ENCODE measurements at regions of chr11 and their contacts with region 1.

Region 1: DNA sequence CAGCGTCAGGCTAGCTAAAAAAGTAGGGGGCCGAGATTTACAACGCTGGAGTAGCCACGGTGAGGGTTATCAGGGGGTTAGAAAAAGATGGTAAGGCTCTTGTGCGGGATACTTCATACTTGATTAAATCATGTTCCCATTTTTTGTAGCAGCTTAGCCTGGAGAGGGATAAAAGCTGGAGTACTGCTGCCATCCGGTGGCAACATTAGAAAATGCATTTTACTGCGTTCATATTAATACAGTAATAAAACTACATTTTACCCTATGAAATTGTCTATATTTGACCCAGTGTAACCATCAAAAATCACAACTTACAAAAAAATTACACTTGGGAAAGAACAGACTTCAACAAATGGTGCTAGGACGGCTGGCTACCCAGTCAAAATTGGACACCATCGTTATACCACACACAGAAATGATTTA is 17.3 kb downstream of the RPUSD4 start:
- DNase-seq: peak in 4 of 5 donors; percentile 26 to 36 (median 30)
- H3K4me3 ChIP-seq: no peak overlapping the region
- H3K4me3 Mint-ChIP-seq: peak overlapping the region in 1 of 8 donors; percentile 45
- H3K27ac ChIP-seq: no peak overlapping the region
- H3K27ac Mint-ChIP-seq: peak overlapping the region in 1 of 7 donors; percentile 42
- H3K4me1 ChIP-seq: no peaks in the 10 kb centered on the region
- H3K4me1 Mint-ChIP-seq: peaks cover 0 to 3% (median 0%) of the 10 kb centered on the region in 4 donors
- H3K27me3 ChIP-seq: no peaks in the 10 kb centered on the region
- H3K27me3 Mint-ChIP-seq: no peaks in the 10 kb centered on the region

Region 2: DNA sequence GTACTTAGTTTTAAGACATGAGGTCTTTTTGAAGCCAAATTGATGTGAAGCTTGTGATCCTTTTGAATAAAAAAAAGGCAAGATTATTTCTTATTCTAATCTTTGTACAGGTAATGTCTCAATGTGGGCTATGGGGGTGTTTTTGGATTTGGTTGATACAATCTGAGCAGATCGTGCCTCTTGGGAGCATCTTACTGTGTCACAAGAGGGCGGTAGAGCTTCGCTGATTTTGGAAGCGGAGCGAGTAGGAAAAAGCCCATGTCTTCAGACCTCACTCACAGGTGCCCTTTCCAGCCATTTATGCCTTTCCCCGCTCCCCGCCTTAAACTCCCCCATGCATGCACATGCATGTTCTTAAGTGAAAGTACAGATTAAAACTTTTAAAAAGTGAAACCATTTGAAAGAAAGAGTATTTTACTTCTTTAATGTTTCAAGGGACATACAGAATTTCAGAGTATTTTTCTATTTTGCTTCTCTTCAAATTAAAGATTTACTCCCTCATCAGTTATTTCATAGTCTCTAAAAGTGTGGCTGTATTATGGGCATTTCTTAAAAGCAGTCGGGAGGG is 271.0 kb before region 1 on chr11:
- CTCF ChIA-PET with region 1: interaction called, 81 read pairs
- POLR2A ChIA-PET with region 1: interaction called, 3 read pairs
- intact Hi-C with region 1: no loop called
- DNase-seq: peak; percentile 47 to 57 (median 52)
- H3K4me3 ChIP-seq: no peak overlapping the region
- H3K4me3 Mint-ChIP-seq: no peak overlapping the region
- H3K27ac ChIP-seq: no peak overlapping the region
- H3K27ac Mint-ChIP-seq: no peak overlapping the region
- H3K4me1 ChIP-seq: no peaks in the 10 kb centered on the region
- H3K4me1 Mint-ChIP-seq: peaks cover 0 to 3% (median 1%) of the 10 kb centered on the region in 4 donors
- H3K27me3 ChIP-seq: no peaks in the 10 kb centered on the region
- H3K27me3 Mint-ChIP-seq: peaks cover 15 to 22% of the 10 kb centered on the region in 2 donors

Region 3: DNA sequence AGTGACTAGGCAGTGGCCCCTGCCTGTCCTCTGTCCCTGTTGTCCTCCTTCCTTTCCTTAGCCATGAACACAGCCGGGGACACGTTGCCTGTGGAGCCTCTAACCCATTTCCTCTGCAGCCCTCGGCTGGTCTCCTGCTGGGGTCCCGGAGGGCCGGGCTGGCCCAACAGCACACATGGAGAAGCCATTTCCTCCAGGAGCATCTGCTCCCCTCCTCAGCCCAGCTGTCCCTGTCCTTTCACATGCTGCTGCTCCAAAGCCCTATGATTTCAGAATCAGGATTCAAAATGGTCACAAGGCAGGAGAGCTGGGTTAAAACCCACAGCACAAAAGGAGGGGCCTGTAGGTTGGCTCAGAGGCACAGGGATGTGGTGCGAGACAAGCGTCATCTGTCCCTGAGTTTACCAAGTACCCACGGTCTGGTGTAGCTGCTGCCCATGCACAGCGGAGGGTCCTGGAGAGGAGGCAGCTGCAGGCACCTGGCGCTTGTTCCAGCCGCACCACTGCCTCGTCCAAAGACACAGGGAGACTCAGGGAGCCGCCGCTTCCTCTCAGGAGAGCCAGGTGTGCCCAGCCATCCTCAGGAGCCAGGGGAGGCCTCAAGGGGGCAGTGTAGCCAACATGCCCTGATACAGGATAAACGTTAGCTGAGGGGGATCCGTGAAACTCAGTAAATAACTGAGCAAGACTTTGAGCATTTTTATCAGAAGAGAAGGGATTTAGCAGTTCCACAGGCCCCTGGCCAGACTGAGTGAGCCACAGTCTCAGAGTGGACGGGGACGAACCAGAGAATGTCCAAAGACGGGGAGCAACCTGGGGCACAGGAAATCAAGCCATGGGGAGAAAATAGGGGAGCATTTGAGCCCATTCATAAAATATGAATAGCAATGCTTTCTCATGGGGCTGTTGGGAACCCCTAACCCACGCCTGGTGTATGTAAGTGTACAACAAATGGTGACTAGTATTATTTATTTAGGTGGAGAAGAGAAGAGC is 252.2 kb before region 1 on chr11:
- CTCF ChIA-PET with region 1: interaction called, 41 read pairs
- POLR2A ChIA-PET with region 1: no interaction called
- intact Hi-C with region 1: no loop called
- DNase-seq: peak in 4 of 5 donors; percentile 27 to 29 (median 29)
- H3K4me3 ChIP-seq: no peak overlapping the region
- H3K4me3 Mint-ChIP-seq: peak overlapping the region in 4 of 8 donors; percentile 5 to 61 (median 48)
- H3K27ac ChIP-seq: no peak overlapping the region
- H3K27ac Mint-ChIP-seq: peak overlapping the region in 2 of 7 donors; percentile 6 to 55
- H3K4me1 ChIP-seq: peaks cover 5% of the 10 kb centered on the region
- H3K4me1 Mint-ChIP-seq: peaks cover 6 to 19% (median 9%) of the 10 kb centered on the region in 4 donors
- H3K27me3 ChIP-seq: peaks cover 6% of the 10 kb centered on the region
- H3K27me3 Mint-ChIP-seq: peaks cover 0 to 3% of the 10 kb centered on the region in 2 donors

Region 4: DNA sequence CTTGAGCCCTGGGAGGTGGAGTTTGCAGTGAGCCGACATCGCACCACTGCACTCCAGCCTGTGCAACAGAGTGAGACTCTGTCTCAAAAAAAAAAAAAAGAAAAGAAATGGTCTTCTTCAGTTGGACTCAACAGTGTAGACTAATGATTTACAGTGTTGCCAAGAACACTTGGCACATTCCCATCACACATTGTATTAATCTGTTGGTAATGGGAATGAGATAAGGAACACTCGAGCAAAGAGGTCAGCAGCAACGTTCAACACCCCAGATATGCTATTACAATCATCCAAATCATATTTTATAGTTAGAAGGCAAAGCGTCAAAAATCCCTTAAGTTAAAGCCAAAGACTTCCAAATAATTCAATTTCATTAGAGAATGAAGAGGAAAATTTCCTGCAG is 145.9 kb before region 1 on chr11:
- CTCF ChIA-PET with region 1: no interaction called
- POLR2A ChIA-PET with region 1: no interaction called
- intact Hi-C with region 1: no loop called
- DNase-seq: no peak
- H3K4me3 ChIP-seq: no peak overlapping the region
- H3K4me3 Mint-ChIP-seq: no peak overlapping the region
- H3K27ac ChIP-seq: no peak overlapping the region
- H3K27ac Mint-ChIP-seq: no peak overlapping the region
- H3K4me1 ChIP-seq: no peaks in the 10 kb centered on the region
- H3K4me1 Mint-ChIP-seq: peaks cover 0 to 6% (median 3%) of the 10 kb centered on the region in 4 donors
- H3K27me3 ChIP-seq: no peaks in the 10 kb centered on the region
- H3K27me3 Mint-ChIP-seq: peaks cover 3 to 4% of the 10 kb centered on the region in 2 donors

Region 5: DNA sequence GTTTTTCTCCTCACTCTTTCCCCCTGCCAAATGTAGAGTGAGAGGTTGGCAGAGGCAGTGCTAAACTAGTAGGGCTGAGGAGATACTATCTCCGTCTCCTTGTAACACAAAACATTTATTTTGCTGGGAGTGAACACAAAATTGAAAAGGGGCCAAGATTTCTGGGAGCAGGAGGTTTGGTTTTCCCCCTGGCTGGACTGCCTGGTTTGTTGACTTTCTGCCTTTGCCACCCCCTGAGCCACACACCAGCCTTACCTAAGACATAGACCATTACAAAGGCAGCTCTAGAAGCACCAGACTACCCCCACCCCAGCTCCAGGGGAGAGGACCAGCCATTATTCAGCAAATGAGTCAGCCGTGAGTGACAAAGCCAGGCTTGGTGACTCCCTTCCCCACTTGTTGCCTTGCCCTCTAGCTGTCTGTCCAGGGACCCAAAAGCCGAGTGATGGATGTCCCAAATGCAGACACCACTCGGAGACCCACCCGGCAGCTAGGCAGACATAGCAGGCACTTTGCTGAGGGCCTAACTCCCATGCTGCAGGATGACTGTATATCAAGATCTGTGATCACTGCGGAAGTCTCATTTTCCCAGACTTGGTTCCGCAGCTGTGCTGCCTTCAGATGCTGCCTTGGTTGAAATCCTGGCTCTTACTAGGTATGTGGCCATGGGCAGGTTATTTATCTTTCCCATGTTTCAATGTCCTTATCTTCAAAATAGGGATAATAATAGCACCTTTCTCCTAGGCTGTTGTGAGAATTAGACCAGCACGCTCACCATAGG is 113.8 kb before region 1 on chr11:
- CTCF ChIA-PET with region 1: no interaction called
- POLR2A ChIA-PET with region 1: no interaction called
- intact Hi-C with region 1: no loop called
- DNase-seq: no peak
- H3K4me3 ChIP-seq: no peak overlapping the region
- H3K4me3 Mint-ChIP-seq: no peak overlapping the region
- H3K27ac ChIP-seq: no peak overlapping the region
- H3K27ac Mint-ChIP-seq: no peak overlapping the region
- H3K4me1 ChIP-seq: peaks cover 25% of the 10 kb centered on the region
- H3K4me1 Mint-ChIP-seq: peaks cover 13 to 26% (median 17%) of the 10 kb centered on the region in 4 donors
- H3K27me3 ChIP-seq: no peaks in the 10 kb centered on the region
- H3K27me3 Mint-ChIP-seq: no peaks in the 10 kb centered on the region

Region 6: DNA sequence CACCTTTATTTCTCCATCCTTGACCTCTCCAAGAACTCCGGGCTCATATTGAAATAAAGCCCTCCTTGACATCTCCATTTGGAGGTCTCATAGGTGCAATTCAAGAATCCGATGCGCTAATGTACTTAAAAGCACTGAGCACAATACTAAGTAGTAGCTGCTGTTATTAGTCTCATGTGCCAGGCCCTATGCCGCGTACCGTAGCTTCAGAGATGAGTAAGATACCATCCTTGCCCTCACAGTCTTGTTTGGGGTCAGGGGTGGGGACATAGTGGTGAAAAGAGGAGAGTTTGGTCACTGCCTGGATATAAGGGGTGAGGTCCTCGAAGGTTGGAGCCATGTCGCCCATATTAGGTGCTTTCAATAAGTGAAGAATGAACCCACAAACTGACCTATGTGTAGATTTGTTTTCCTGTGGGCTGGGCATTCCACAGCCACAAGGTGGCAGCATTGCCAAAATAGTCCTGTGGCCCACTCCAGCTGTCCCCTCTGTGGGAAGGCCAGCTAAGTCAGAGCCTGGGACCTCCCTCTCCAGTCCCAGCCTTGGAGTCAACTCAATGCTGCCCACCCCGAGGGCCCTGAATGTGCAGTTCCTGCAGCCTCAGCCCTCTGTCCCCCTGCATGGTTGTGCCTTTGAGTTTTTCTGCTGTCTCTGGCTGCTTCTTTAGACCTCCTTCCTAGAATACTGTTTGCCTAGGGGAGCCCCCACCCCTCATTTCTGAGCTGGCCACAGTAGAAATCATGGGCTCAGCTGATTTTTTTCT is 116.3 kb after region 1 on chr11:
- CTCF ChIA-PET with region 1: no interaction called
- POLR2A ChIA-PET with region 1: no interaction called
- intact Hi-C with region 1: no loop called
- DNase-seq: peak; percentile 31 to 47 (median 39)
- H3K4me3 ChIP-seq: no peak overlapping the region
- H3K4me3 Mint-ChIP-seq: no peak overlapping the region
- H3K27ac ChIP-seq: no peak overlapping the region
- H3K27ac Mint-ChIP-seq: peak overlapping the region in 2 of 7 donors; percentile 58 to 65
- H3K4me1 ChIP-seq: peaks cover 15% of the 10 kb centered on the region
- H3K4me1 Mint-ChIP-seq: peaks cover 25 to 47% (median 33%) of the 10 kb centered on the region in 4 donors
- H3K27me3 ChIP-seq: no peaks in the 10 kb centered on the region
- H3K27me3 Mint-ChIP-seq: no peaks in the 10 kb centered on the region

Region 7: GRCh38 chr11:126391970-126392639 is 198.0 kb after region 1 on chr11:
- CTCF ChIA-PET with region 1: no interaction called
- POLR2A ChIA-PET with region 1: no interaction called
- intact Hi-C with region 1: no loop called
- DNase-seq: no peak
- H3K4me3 ChIP-seq: no peak overlapping the region
- H3K4me3 Mint-ChIP-seq: no peak overlapping the region
- H3K27ac ChIP-seq: no peak overlapping the region
- H3K27ac Mint-ChIP-seq: no peak overlapping the region
- H3K4me1 ChIP-seq: no peaks in the 10 kb centered on the region
- H3K4me1 Mint-ChIP-seq: peaks cover 0 to 2% (median 0%) of the 10 kb centered on the region in 4 donors
- H3K27me3 ChIP-seq: no peaks in the 10 kb centered on the region
- H3K27me3 Mint-ChIP-seq: no peaks in the 10 kb centered on the region